ENCODE measurements at regions of chr7 and their contacts with region 1.

Region 1: DNA sequence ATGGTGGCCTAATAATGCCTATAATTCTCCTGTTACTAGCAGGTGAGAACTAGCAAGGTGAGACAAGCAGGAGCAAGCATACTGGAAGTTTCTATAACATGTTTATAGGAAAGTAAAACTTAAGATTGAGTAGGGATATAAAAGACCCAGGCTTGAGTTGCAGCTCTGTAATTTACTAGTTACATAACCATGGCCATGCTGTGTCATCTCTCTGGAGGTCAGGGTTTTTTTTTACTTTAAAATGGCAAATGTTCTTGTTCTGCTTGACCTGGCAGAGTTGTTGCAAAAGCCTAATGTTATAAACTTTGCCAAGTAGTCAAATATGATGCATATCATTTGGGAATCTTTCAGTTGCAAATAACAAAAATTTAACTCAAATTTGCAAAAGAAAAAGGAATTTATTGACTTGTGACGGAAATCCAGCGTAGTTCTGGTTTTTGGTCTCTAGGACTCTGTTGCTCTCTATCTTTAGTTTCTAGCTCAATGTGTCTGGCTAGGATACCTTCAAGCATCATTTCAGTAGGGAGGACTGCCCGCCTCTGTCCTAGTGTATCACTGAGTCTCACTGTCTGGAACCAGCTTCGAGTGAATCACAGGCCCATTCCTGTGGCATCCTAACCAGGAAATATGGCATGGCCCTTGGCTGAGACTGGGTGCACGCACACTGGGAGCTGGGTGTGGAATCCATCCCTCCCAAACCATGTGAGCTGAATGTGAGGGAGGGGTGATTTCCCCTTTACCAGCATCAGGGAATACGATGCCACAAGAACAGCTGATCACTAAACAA is 67.9 kb downstream of the ADAM22 start:
- DNase-seq: no peak
- H3K4me3 ChIP-seq: no peak overlapping the region
- H3K27ac ChIP-seq: no peak overlapping the region
- H3K4me1 ChIP-seq: no peaks in the 10 kb centered on the region
- CTCF ChIP-seq: no peak

Region 2: DNA sequence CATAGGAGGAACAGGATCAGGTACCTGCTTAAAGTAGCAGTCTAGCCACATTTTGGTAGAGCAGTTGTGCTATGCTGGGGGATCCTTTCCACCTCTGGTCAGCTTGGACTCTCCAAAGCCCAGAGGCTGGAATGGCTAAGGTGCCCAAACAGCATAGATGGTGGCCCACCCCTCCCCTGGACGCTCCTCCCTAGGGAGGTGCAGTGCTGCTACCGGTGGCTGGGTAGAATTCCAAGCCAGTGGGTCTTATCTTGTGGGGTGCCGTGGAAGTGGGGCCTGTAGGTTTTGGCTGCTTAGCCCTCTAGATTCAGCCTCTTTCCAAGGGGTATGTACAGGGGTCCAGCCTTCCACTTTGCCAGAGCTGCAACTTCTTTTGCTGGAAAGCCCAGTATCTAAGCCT is 329.7 kb before region 1 on chr7:
- CTCF ChIA-PET with region 1: no interaction called
- POLR2A ChIA-PET with region 1: no interaction called
- intact Hi-C with region 1: loop called (anchors 10 kb)
- DNase-seq: no peak
- H3K4me3 ChIP-seq: no peak overlapping the region
- H3K27ac ChIP-seq: no peak overlapping the region
- H3K4me1 ChIP-seq: no peaks in the 10 kb centered on the region
- CTCF ChIP-seq: no peak

Region 3: GRCh38 chr7:87877353-87878040 is 124.4 kb before region 1 on chr7:
- CTCF ChIA-PET with region 1: no interaction called
- POLR2A ChIA-PET with region 1: no interaction called
- intact Hi-C with region 1: no loop called
- DNase-seq: no peak
- H3K4me3 ChIP-seq: peak overlapping the region; percentile 94
- H3K27ac ChIP-seq: peak overlapping the region; percentile 99
- H3K4me1 ChIP-seq: peaks cover 40% of the 10 kb centered on the region
- CTCF ChIP-seq: no peak

Region 4: DNA sequence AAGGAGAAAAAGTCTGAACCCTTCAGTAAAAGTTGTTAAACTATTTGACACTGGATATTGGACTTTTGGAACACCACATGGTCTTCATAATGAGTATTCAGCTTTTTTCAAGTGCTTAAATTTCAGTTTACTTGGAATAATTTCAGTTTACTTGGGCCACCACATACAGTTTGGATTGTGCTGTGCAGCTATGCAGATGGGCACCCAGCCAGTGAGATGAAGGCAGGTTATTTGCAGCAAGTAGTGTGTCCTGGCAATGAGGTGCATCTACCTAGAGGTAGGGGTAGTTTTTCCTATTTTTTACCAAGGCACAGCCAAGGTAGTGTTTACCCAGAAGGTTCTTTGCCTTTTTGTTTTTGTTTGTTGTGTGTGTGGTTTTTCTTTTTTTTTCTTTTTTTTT is 91.8 kb before region 1 on chr7:
- CTCF ChIA-PET with region 1: no interaction called
- POLR2A ChIA-PET with region 1: no interaction called
- intact Hi-C with region 1: no loop called
- DNase-seq: no peak
- H3K4me3 ChIP-seq: no peak overlapping the region
- H3K27ac ChIP-seq: no peak overlapping the region
- H3K4me1 ChIP-seq: no peaks in the 10 kb centered on the region
- CTCF ChIP-seq: no peak